ENCODE measurements at regions of chr7 and their contacts with region 1.

Region 1: DNA sequence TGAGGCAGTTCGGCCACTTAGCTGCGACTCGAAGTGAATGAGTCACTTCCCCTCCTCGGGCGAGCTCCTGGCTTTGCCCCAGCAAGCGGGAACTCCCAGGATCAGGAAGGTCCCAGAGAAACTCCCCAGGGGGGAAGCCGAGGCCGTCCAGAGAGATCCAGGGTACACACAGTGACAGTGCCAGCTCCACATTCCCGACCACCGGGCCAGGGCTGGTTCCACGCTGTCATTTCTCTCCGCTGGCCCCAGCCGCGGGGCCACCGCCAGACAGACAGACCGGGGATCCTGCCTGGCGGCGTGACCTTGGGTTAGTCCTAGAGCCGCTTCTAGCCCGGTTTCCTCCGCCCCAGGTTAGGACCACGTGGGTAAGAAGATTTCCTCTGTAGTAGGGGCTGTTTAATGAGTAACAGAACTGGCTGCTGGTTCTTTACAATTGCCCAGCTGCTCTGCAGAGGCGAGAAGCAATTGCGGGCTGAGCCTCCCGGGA is 463 bp upstream of the UPP1 start:
- DNase-seq: no peak
- ATAC-seq: peak; percentile 73
- H3K4me3 Mint-ChIP-seq: peak overlapping the region; percentile 88
- H3K27ac Mint-ChIP-seq: peak overlapping the region; percentile 82
- H3K4me1 Mint-ChIP-seq: peaks cover 51% of the 10 kb centered on the region
- H3K27me3 Mint-ChIP-seq: no peaks in the 10 kb centered on the region
- CTCF ChIP-seq: no peak

Region 2: GRCh38 chr7:47571331-47572093 is 517.1 kb before region 1 on chr7:
- CTCF ChIA-PET with region 1: no interaction called
- POLR2A ChIA-PET with region 1: no interaction called
- intact Hi-C with region 1: loop called (anchors 10 kb)
- DNase-seq: no peak
- ATAC-seq: peak; percentile 32
- H3K4me3 Mint-ChIP-seq: peak overlapping the region; percentile 75
- H3K27ac Mint-ChIP-seq: peak overlapping the region; percentile 87
- H3K4me1 Mint-ChIP-seq: peaks cover 90% of the 10 kb centered on the region
- H3K27me3 Mint-ChIP-seq: no peaks in the 10 kb centered on the region
- CTCF ChIP-seq: no peak

Region 3: GRCh38 chr7:47635091-47636080 is 453.2 kb before region 1 on chr7:
- CTCF ChIA-PET with region 1: no interaction called
- POLR2A ChIA-PET with region 1: no interaction called
- intact Hi-C with region 1: no loop called
- DNase-seq: no peak
- ATAC-seq: no peak
- H3K4me3 Mint-ChIP-seq: no peak overlapping the region
- H3K27ac Mint-ChIP-seq: no peak overlapping the region
- H3K4me1 Mint-ChIP-seq: peaks cover 29% of the 10 kb centered on the region
- H3K27me3 Mint-ChIP-seq: no peaks in the 10 kb centered on the region
- CTCF ChIP-seq: no peak

Region 4: GRCh38 chr7:47932016-47932415 is 156.6 kb before region 1 on chr7:
- CTCF ChIA-PET with region 1: no interaction called
- POLR2A ChIA-PET with region 1: interaction called, 6 read pairs
- intact Hi-C with region 1: loop called (anchors 1 kb)
- DNase-seq: no peak
- ATAC-seq: no peak
- H3K4me3 Mint-ChIP-seq: no peak overlapping the region
- H3K27ac Mint-ChIP-seq: no peak overlapping the region
- H3K4me1 Mint-ChIP-seq: peaks cover 35% of the 10 kb centered on the region
- H3K27me3 Mint-ChIP-seq: peaks cover 2% of the 10 kb centered on the region
- CTCF ChIP-seq: no peak

Region 5: DNA sequence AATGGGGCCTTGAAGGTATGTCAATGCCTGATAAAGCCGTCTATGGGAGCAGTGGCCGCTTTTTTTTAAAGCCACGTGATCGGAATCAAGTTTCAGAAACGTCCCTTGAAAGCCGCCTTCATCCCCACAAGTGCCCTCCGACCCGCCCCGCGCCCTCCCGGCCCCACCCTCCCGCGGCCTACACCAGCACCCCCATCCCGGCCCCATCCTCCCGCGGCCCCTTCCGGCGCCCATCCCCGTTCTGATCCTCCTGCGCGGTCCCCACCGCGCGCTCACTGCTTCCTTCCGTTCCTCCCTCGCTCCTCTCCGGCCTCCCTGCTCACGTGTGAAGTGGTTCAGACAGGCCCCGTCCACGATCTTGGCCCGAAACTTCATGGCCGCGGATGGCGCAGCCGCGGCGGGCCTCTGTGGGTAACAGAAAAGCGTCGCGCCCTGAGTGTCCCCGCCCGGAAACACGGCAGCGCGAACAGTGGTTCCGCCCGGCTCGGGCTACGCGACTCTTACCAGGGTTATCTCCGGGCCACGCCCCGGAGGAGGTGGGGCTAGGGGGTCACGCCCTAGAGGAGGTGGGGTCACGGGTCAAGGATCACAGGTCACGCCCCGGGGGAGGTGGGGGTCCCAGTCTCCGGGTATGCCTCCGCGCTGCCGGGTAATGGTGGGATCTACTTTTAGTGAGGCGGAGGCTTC is 109.3 kb before region 1 on chr7 and contains the start of gene HUS1:
- CTCF ChIA-PET with region 1: no interaction called
- POLR2A ChIA-PET with region 1: interaction called, 3 read pairs
- intact Hi-C with region 1: loop called (anchors 1 kb)
- DNase-seq: peak; percentile 84
- ATAC-seq: peak; percentile 97
- H3K4me3 Mint-ChIP-seq: peak within 1 kb of the TSS; percentile 99
- H3K27ac Mint-ChIP-seq: peak within 1 kb of the TSS; percentile 99
- H3K4me1 Mint-ChIP-seq: peaks cover 28% of the 10 kb centered on the region
- H3K27me3 Mint-ChIP-seq: no peaks in the 10 kb centered on the region
- CTCF ChIP-seq: no peak
- total RNA-seq, gene HUS1: 37.3 and 42.5 TPM in 2 replicates

Region 6: GRCh38 chr7:47991741-47992311 is 96.8 kb before region 1 on chr7:
- CTCF ChIA-PET with region 1: interaction called, 4 read pairs
- POLR2A ChIA-PET with region 1: interaction called, 9 read pairs
- intact Hi-C with region 1: loop called (anchors 1 kb)
- DNase-seq: peak; percentile 78
- ATAC-seq: peak; percentile 98
- H3K4me3 Mint-ChIP-seq: peak overlapping the region; percentile 97
- H3K27ac Mint-ChIP-seq: peak overlapping the region; percentile 82
- H3K4me1 Mint-ChIP-seq: peaks cover 14% of the 10 kb centered on the region
- H3K27me3 Mint-ChIP-seq: no peaks in the 10 kb centered on the region
- CTCF ChIP-seq: peak; percentile 40

Region 7: DNA sequence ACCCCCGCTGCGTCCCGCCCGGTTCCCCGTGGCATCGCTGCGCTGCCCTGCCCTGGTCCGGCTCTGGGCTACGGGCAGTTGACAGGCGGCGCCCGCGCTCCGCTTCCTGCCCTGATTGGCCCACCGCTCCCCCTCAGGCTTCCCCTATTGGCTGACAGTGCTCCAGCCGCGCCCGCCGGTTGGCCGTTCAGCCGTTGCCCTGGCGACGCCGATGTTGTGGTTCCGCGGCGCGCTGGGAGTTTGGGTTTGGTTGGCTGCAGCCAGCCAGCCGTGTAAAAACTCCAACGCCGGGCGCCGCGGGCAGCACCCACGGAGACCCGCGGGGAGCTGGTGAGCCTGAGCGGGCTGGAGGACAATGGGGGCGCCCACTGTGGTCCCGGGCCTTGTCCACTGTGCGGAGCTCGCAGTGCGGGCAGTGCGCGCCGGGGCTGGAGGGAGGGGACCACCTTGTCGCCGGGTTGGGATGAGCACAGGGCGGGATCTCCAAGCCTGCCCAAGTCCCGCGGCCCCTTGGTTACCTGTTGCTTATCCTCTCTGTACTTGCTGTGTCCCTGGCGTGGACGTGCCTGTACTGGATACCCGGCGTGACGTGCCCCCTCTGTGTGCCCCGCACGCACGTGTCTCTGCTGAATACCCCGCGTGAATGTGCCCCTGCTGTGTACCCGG is 53.2 kb before region 1 on chr7 and contains the start of gene C7orf57:
- CTCF ChIA-PET with region 1: no interaction called
- POLR2A ChIA-PET with region 1: no interaction called
- intact Hi-C with region 1: loop called (anchors 1 kb)
- DNase-seq: peak; percentile 75
- ATAC-seq: peak; percentile 97
- H3K4me3 Mint-ChIP-seq: peak within 1 kb of the TSS; percentile 73
- H3K27ac Mint-ChIP-seq: no peak within 1 kb of the TSS
- H3K4me1 Mint-ChIP-seq: peaks cover 13% of the 10 kb centered on the region
- H3K27me3 Mint-ChIP-seq: peaks cover 25% of the 10 kb centered on the region
- CTCF ChIP-seq: no peak
- total RNA-seq, gene C7orf57: not detected in 2 replicates

Region 8: GRCh38 chr7:48458701-48459524 is 370.3 kb after region 1 on chr7:
- CTCF ChIA-PET with region 1: no interaction called
- POLR2A ChIA-PET with region 1: no interaction called
- intact Hi-C with region 1: no loop called
- DNase-seq: no peak
- ATAC-seq: no peak
- H3K4me3 Mint-ChIP-seq: no peak overlapping the region
- H3K27ac Mint-ChIP-seq: no peak overlapping the region
- H3K4me1 Mint-ChIP-seq: no peaks in the 10 kb centered on the region
- H3K27me3 Mint-ChIP-seq: no peaks in the 10 kb centered on the region
- CTCF ChIP-seq: no peak

Measured in activated B cell treated with CpG ODN at 0.5 μM for 24 hours (primary cell).